Body of pancreas (tissue), 4 donors: ENCODE measurements at regions of chr11 and their contacts with region 1.

Region 1: DNA sequence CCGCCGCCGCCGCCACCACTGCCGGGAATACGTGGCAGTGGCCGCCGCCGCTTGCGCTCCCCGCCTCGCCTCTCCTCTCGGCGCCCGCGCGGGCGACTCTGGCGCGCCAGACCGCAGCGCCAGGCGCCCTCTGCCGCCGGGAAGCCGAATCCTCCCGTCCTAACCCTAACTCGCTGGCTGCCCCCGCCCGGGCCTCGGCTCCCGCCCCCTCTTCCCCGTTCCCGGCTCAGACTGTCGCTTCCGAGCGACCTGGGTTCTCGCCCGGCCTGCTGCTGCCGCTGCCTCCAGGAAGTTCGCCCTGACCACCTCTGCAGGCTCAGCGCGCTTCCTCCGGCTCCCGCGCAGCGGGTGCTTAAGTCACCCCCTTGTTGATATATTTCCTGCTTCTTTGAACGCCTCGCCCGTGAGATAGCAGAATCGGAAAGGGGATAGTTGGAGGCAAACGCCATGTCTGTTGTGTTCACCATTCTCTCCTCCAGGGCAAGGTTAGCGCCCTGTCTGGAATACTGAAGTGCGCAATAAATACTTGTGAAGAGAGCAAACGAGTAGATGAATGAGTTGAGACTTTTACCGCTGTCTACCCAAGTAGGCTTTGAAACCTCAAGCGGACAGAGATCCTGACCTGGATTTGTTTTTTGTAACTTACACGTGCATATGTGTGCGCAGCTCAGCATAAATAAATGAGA is at the start of gene SMCO4:
- DNase-seq: peak; percentile 86 to 89 (median 87)
- ATAC-seq: peak; percentile 92
- H3K4me3 ChIP-seq: peak within 1 kb of the TSS; percentile 64 to 72
- H3K27ac ChIP-seq: peak within 1 kb of the TSS; percentile 68 to 93 (median 90)
- H3K4me1 ChIP-seq: peaks cover 21% of the 10 kb centered on the region
- H3K27me3 ChIP-seq: no peaks in the 10 kb centered on the region
- CTCF ChIP-seq: peak; percentile 63 to 93 (median 81)
- POLR2A ChIP-seq: peak; percentile 22 to 53 (median 43)
- total RNA-seq, gene SMCO4: 4.6 to 27.5 TPM

Region 2: DNA sequence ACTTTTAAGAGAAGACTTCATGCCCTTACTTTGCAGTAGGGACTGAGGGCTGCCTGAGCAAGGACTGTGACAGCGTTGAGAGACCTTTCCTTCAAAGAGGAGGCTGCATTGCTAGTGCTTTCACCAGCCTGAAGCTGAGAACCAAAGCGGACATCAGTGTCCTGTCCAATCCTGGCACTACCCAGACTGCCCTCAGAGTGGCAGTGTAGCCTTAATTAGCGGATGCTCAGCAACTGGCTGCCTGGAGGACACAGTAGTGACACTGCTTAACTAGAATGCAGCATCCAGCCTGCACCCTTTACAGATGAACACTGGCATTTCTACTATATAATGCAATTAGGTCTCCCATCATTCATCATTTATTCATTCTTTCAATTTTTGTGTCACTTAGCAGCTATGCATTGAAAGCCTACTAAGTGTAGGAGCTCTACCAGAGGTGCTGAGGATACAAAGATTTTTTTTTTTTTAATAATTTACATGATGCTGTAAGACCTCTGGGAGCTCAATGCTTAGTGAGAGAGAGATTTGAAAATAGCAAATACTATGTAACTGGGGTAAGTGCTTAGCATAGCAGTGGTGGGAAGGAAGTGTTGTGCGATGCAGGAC is 308.7 kb before region 1 on chr11:
- intact Hi-C with region 1: loop called (anchors 10 kb)
- DNase-seq: peak; percentile 85 to 90 (median 89)
- ATAC-seq: peak; percentile 99
- H3K4me3 ChIP-seq: no peak overlapping the region
- H3K27ac ChIP-seq: no peak overlapping the region
- H3K4me1 ChIP-seq: peaks cover 14% of the 10 kb centered on the region
- H3K27me3 ChIP-seq: no peaks in the 10 kb centered on the region
- CTCF ChIP-seq: peak; percentile 72 to 97 (median 96)
- POLR2A ChIP-seq: no peak